T-cell (primary cell): ENCODE measurements at regions of chr12 and their contacts with region 1.

Region 1: DNA sequence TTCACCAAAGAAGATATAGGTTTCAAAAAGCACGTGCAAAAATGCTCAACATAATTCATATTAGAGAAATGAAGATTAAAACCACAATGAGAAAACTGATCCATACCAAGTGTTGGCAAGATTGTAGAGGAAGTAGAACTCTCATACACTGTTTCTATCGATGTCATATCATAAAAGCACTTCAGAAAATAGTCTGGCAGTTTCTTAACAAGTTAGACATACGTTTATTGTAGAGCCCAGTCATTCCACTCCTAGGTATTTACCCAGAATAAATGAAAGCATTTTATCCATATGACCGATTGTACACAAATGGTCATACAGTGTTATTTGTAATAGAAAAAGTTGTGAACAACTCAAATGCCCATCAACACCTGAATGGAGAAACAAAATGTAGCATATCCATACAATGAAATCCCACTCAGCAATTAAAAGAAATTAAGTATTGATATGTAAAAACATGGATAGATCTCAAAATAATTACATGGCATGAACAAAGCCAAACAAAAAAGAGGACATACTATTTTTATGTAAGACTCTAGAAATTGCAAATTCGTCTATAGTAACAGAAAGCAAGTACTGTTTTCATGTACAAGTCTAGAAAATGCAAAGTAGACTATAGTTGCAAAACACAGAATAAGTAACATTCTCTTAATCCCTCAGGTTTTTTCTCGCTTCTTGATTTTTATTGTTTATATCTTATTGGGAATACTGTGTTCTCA is 41.0 kb downstream of the USP15 start:
- DNase-seq: no peak
- ATAC-seq: peak in 1 of 4 experiments; percentile 24
- H3K4me3 ChIP-seq: no peak overlapping the region
- H3K4me3 Mint-ChIP-seq: no peak overlapping the region
- H3K27ac ChIP-seq: no peak overlapping the region
- H3K27ac Mint-ChIP-seq: peak overlapping the region; percentile 9 to 33
- H3K4me1 ChIP-seq: peaks cover 2 to 10% of the 10 kb centered on the region in 2 experiments
- H3K4me1 Mint-ChIP-seq: peaks cover 57 to 73% (median 70%) of the 10 kb centered on the region in 3 donors
- H3K27me3 ChIP-seq: no peaks in the 10 kb centered on the region
- H3K27me3 Mint-ChIP-seq: no peaks in the 10 kb centered on the region

Region 2: GRCh38 chr12:62278022-62278421 is 23.2 kb before region 1 on chr12:
- CTCF ChIA-PET with region 1: no interaction called
- POLR2A ChIA-PET with region 1: interaction called in 1 of 2 experiments, 10 read pairs
- DNase-seq: no peak
- ATAC-seq: no peak
- H3K4me3 ChIP-seq: no peak overlapping the region
- H3K4me3 Mint-ChIP-seq: no peak overlapping the region
- H3K27ac ChIP-seq: no peak overlapping the region
- H3K27ac Mint-ChIP-seq: no peak overlapping the region
- H3K4me1 ChIP-seq: peaks cover 10 to 28% of the 10 kb centered on the region in 2 experiments
- H3K4me1 Mint-ChIP-seq: peaks cover 86 to 87% (median 86%) of the 10 kb centered on the region in 3 donors
- H3K27me3 ChIP-seq: no peaks in the 10 kb centered on the region
- H3K27me3 Mint-ChIP-seq: no peaks in the 10 kb centered on the region